ENCODE measurements at regions of chr14 and their contacts with region 1.

Region 1: GRCh38 chr14:20343092-20343861 is at the start of gene PARP2:
- DNase-seq: peak; percentile 98
- ATAC-seq: peak; percentile 99
- H3K4me3 ChIP-seq: peak within 1 kb of the TSS; percentile 84 to 88
- H3K27ac ChIP-seq: peak within 1 kb of the TSS; percentile 95
- H3K4me1 ChIP-seq: peaks cover 3% of the 10 kb centered on the region; the same call in 1 of the 2 replicates
- H3K27me3 ChIP-seq: no peaks in the 10 kb centered on the region
- CTCF ChIP-seq: no peak
- total RNA-seq, gene PARP2: 26.6 TPM

Region 2: GRCh38 chr14:20305265-20306078 is 37.8 kb before region 1 on chr14 and contains the start of gene TTC5:
- CTCF ChIA-PET with region 1: no interaction called
- POLR2A ChIA-PET with region 1: no interaction called
- in situ Hi-C with region 1: no loop called
- intact Hi-C with region 1: no loop called
- DNase-seq: peak; percentile 80
- ATAC-seq: peak; percentile 97
- H3K4me3 ChIP-seq: peak within 1 kb of the TSS; percentile 80 to 89
- H3K27ac ChIP-seq: peak within 1 kb of the TSS; percentile 76
- H3K4me1 ChIP-seq: peaks cover 3% of the 10 kb centered on the region; the same call in 1 of the 2 replicates
- H3K27me3 ChIP-seq: no peaks in the 10 kb centered on the region
- CTCF ChIP-seq: peak; percentile 89
- total RNA-seq, gene TTC5: 10.0 TPM

Region 3: DNA sequence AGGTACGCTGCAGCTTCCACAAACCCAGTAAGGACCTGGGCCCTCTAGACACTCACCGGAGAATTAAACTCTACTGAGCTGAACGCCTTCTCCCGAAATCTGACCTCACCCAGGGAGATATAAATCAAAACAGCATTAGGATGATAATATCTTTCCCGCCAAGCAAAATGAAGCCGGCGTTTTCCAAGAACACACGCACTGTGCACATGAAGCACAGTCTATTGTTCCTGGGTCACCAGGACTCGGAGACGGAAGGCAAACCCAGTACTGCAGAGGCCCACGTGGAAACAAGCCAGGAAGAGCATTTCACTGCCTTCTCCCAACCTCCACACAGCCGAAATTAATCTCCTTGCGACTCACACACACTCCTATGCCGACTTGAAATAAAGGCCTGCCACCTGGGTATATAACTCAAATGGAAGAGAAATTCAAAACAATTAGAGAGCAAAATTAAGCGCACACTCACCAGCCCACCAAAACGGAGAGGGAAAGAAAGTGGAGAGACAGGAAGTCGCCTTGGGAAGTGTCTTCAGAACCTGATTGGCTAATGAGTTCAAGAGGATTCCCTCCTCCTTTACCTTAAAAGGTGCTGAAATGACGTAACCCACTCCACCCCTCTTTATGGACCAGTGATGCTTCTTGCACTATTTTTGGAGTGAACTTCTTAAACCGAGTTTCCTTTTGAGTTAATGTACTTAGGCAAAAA is 10.3 kb before region 1 on chr14 and contains the start of gene CCNB1IP1:
- CTCF ChIA-PET with region 1: interaction called, 3 read pairs
- POLR2A ChIA-PET with region 1: interaction called, 17 read pairs
- in situ Hi-C with region 1: no loop called
- intact Hi-C with region 1: no loop called
- DNase-seq: peak; percentile 64
- ATAC-seq: peak; percentile 99
- H3K4me3 ChIP-seq: peak within 1 kb of the TSS; percentile 77 to 85
- H3K27ac ChIP-seq: peak within 1 kb of the TSS; percentile 89
- H3K4me1 ChIP-seq: peaks cover 6% of the 10 kb centered on the region
- H3K27me3 ChIP-seq: no peaks in the 10 kb centered on the region
- CTCF ChIP-seq: no peak
- total RNA-seq, gene CCNB1IP1: 20.3 TPM

Region 4: GRCh38 chr14:20454516-20455354 is 111.5 kb after region 1 on chr14 and contains the starts of genes APEX1 and OSGEP:
- CTCF ChIA-PET with region 1: no interaction called
- POLR2A ChIA-PET with region 1: interaction called, 32 read pairs
- in situ Hi-C with region 1: no loop called
- intact Hi-C with region 1: no loop called
- DNase-seq: peak; percentile 94
- ATAC-seq: peak; percentile 90
- H3K4me3 ChIP-seq: peak within 1 kb of the TSS; percentile 86 to 93
- H3K27ac ChIP-seq: peak within 1 kb of the TSS; percentile 97
- H3K4me1 ChIP-seq: peaks cover 28% of the 10 kb centered on the region
- H3K27me3 ChIP-seq: no peaks in the 10 kb centered on the region
- CTCF ChIP-seq: no peak
- total RNA-seq, gene APEX1: 163 TPM
- total RNA-seq, gene OSGEP: 26.6 TPM